ENCODE measurements at regions of chr17 and their contacts with region 1.

Region 1: DNA sequence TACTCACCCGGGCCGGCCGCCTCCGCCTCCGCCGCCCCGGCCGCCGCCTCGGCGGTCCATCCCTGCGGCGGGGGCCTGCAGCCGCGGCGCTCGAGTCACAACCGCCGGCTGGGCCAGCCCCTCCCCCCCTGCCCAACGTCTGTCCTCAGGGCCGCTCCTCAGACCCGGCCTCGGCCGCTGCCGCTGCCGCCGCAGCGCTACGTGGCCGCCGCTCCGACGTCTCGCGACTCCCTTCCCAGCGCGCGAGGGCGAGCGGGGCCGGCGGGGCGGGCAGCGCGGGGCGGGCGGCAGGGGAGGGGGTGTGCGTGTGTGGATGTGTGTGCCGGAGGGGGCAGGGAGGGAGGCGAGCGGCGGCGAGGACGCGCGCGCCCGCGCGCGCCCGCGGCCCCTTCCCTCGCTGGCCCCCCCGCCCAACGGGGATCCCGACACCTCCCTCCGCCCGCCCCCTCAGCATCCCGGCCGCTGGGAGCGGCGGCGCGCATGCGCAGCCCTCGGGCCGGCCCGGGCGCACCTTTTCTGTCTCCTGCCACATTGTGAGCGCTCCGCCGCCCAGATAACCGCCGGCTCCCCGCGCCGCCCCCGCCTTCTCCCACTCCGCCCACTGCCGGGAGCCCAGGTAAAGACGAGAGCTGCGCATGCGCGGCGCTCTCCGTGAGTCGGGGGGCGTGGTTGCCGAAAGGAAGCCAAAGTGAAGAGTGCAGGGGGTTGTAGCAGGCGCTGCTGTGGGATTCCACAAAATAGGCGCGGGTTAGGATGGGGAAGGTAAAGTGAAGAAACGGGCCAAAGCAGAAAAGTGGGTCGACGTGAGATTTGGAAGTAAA is at the start of gene ZNF652:
- DNase-seq: peak; percentile 75
- ATAC-seq: peak; percentile 88
- H3K4me3 ChIP-seq: peak within 1 kb of the TSS; percentile 80
- H3K27ac ChIP-seq: peak within 1 kb of the TSS; percentile 57
- H3K4me1 ChIP-seq: peaks cover 6% of the 10 kb centered on the region; the same call in 1 of the 2 replicates
- H3K27me3 ChIP-seq: no peaks in the 10 kb centered on the region
- CTCF ChIP-seq: no peak
- POLR2A ChIP-seq: no peak
- RAD21 ChIP-seq: no peak
- total RNA-seq, gene ZNF652: 8.8 and 9.7 TPM in 2 replicates

Region 2: DNA sequence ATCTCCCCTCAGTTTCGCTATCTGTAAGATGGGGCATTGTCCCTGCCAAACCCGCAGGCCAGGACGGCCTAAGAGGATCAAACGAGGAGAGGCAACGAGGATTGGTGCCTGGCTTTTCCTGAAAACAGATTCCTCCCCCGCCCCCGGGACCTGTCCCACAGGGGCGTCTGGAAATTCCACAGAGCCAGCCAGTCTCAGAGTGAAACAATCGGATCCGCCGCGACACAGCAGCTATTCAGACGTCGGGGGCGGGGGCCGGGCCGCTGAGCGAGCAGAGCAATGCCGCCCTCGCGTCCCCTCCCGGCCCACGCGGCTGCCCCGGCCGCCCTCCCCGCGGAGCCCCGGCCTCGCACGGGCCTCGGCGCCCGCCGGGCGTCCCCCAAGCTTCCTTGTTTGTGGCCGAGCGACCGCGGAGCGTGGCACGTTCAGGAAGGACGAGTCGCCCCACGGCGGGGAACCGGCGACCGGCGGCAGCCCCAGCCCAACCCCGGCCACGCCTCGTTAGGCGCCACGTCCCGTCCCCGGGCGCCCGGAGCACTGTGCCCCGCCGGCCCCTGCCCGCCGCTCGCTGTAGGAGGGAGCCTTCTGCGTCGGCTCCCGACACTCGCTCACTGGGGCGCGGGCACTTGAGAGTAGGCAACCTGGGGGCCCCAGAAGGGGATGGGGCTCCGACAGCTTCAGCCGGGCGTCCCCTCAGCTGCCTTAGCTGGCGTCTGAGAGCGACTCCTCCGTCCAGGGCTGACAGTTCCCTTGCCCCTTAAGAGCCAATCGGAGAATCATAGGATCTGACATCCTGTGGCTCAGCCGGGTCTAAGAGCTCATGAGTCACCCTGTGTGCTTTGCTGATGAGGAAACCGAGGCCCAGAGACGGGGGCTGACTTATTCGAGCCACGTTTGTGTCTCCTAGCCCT is 101.8 kb before region 1 on chr17:
- CTCF ChIA-PET with region 1: no interaction called
- POLR2A ChIA-PET with region 1: interaction called, 16 read pairs
- dilution Hi-C with region 1: no loop called
- in situ Hi-C with region 1: no loop called
- intact Hi-C with region 1: no loop called
- DNase-seq: peak; percentile 82
- ATAC-seq: peak; percentile 84
- H3K4me3 ChIP-seq: peak overlapping the region; percentile 46
- H3K27ac ChIP-seq: peak overlapping the region; percentile 33; the same call in 1 of the 2 replicates
- H3K4me1 ChIP-seq: peaks cover 2% of the 10 kb centered on the region; the same call in 1 of the 2 replicates
- H3K27me3 ChIP-seq: no peaks in the 10 kb centered on the region
- CTCF ChIP-seq: no peak
- POLR2A ChIP-seq: peak; percentile 63
- RAD21 ChIP-seq: no peak

Region 3: DNA sequence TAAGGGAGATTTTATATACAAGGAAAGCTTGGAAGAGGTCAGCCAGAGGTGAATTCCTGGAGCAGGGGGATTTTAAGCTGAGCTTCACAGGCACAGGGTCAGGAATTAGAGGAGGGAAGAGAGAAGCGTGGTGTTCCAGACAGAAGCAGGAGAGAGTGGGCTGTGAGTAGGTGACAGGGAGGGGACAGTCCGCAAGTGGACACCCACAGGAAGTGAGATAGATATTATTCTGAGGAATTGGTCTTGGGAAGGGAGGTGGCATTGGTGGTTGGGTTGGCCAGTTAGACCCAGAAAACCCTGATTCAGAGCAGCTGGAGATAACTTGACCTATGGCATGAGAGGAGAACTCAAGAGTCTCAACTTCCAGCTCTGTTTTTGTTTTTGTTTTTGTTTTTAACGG is 37.9 kb after region 1 on chr17:
- CTCF ChIA-PET with region 1: no interaction called
- POLR2A ChIA-PET with region 1: no interaction called
- dilution Hi-C with region 1: no loop called
- in situ Hi-C with region 1: no loop called
- intact Hi-C with region 1: loop called (anchors 5 kb)
- DNase-seq: no peak
- ATAC-seq: no peak
- H3K4me3 ChIP-seq: no peak overlapping the region
- H3K27ac ChIP-seq: no peak overlapping the region
- H3K4me1 ChIP-seq: no peaks in the 10 kb centered on the region
- H3K27me3 ChIP-seq: peaks cover 12% of the 10 kb centered on the region
- CTCF ChIP-seq: no peak
- POLR2A ChIP-seq: no peak
- RAD21 ChIP-seq: no peak

Measured in IMR-90 (cell line).